Naive thymus-derived CD4-positive, alpha-beta T cell (primary cell): ENCODE measurements at regions of chr19 and their contacts with region 1.

Region 1: GRCh38 chr19:57279418-57280066 is 743 bp upstream of the ZNF460 start:
- DNase-seq: peak in 6 of 9 donors; percentile 60 to 81 (median 78)
- ATAC-seq: peak; percentile 85
- H3K4me3 ChIP-seq: peak overlapping the region; percentile 80
- H3K4me3 Mint-ChIP-seq: no peak overlapping the region
- H3K27ac ChIP-seq: peak overlapping the region; percentile 98
- H3K27ac Mint-ChIP-seq: peak overlapping the region in 2 of 9 donors; percentile 6 to 51
- H3K4me1 ChIP-seq: peaks cover 18 to 23% of the 10 kb centered on the region in 2 donors
- H3K4me1 Mint-ChIP-seq: peaks cover 7 to 33% (median 25%) of the 10 kb centered on the region in 7 donors
- H3K27me3 ChIP-seq: no peaks in the 10 kb centered on the region
- H3K27me3 Mint-ChIP-seq: no peaks in the 10 kb centered on the region

Region 2: DNA sequence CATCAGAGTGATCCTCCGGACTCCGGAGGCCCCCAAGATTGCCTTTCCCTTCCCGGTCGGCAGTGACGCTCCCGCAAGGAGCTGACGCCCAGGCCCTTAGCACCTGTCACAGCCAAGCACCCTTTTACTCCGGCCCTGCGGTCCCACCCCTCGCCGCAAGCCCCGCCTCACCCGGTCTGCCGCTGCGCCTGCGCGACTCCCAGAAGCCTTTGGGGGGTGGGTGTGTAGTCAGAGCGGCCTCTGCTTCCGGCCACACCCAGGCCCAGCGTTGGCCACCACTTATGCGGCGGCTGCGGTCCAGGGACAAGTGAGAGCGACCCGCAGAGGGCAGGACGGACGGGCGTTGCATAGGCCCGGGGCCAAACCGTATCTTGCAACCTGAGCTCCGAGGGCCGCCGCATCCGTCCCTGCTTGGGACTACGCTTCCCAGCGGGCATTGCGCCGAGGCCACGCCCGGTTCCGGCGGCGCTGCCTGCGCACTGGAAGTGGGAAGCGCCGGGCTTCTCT is 741.2 kb before region 1 on chr19:
- CTCF ChIA-PET with region 1: no interaction called
- POLR2A ChIA-PET with region 1: no interaction called
- intact Hi-C with region 1: loop called in 1 of 2 experiments (anchors 1 kb)
- DNase-seq: peak; percentile 84 to 94 (median 89)
- ATAC-seq: peak; percentile 94
- H3K4me3 ChIP-seq: peak overlapping the region; percentile 87
- H3K4me3 Mint-ChIP-seq: peak overlapping the region; percentile 88 to 95 (median 93)
- H3K27ac ChIP-seq: peak overlapping the region; percentile 83
- H3K27ac Mint-ChIP-seq: peak overlapping the region; percentile 90 to 97 (median 94)
- H3K4me1 ChIP-seq: peaks cover 5% of the 10 kb centered on the region in 2 donors
- H3K4me1 Mint-ChIP-seq: peaks cover 13 to 27% (median 21%) of the 10 kb centered on the region in 7 donors
- H3K27me3 ChIP-seq: no peaks in the 10 kb centered on the region
- H3K27me3 Mint-ChIP-seq: peaks cover 0 to 4% (median 0%) of the 10 kb centered on the region in 5 donors

Region 3: GRCh38 chr19:57320180-57321084 is 40.9 kb after region 1 on chr19 and contains the start of gene ZNF543:
- CTCF ChIA-PET with region 1: no interaction called
- POLR2A ChIA-PET with region 1: no interaction called
- intact Hi-C with region 1: loop called (anchors 1 kb)
- DNase-seq: peak; percentile 78 to 90 (median 84)
- ATAC-seq: peak; percentile 98
- H3K4me3 ChIP-seq: peak within 1 kb of the TSS; percentile 76
- H3K4me3 Mint-ChIP-seq: peak within 1 kb of the TSS; percentile 87 to 98 (median 94)
- H3K27ac ChIP-seq: peak within 1 kb of the TSS; percentile 83
- H3K27ac Mint-ChIP-seq: peak within 1 kb of the TSS; percentile 82 to 98 (median 96)
- H3K4me1 ChIP-seq: peaks cover 0 to 18% of the 10 kb centered on the region in 2 donors
- H3K4me1 Mint-ChIP-seq: peaks cover 14 to 30% (median 25%) of the 10 kb centered on the region in 7 donors
- H3K27me3 ChIP-seq: peaks cover 0 to 6% of the 10 kb centered on the region in 2 donors
- H3K27me3 Mint-ChIP-seq: peaks cover 20 to 31% (median 24%) of the 10 kb centered on the region in 5 donors
- total RNA-seq, gene ZNF543: 3.6 to 9.0 (median 8.0) TPM

Region 4: GRCh38 chr19:57477191-57478008 is 197.9 kb after region 1 on chr19 and contains the start of gene ZNF772:
- CTCF ChIA-PET with region 1: no interaction called
- POLR2A ChIA-PET with region 1: no interaction called
- intact Hi-C with region 1: loop called in 1 of 2 experiments (anchors 1 kb)
- DNase-seq: peak; percentile 55 to 96 (median 88)
- ATAC-seq: peak; percentile 99
- H3K4me3 ChIP-seq: peak within 1 kb of the TSS; percentile 80
- H3K4me3 Mint-ChIP-seq: peak within 1 kb of the TSS; percentile 87 to 95 (median 92)
- H3K27ac ChIP-seq: peak within 1 kb of the TSS; percentile 77
- H3K27ac Mint-ChIP-seq: peak within 1 kb of the TSS; percentile 84 to 96 (median 89)
- H3K4me1 ChIP-seq: peaks cover 5 to 12% of the 10 kb centered on the region in 2 donors
- H3K4me1 Mint-ChIP-seq: peaks cover 10 to 26% (median 19%) of the 10 kb centered on the region in 7 donors
- H3K27me3 ChIP-seq: no peaks in the 10 kb centered on the region
- H3K27me3 Mint-ChIP-seq: peaks cover 0 to 7% (median 0%) of the 10 kb centered on the region in 5 donors
- total RNA-seq, gene ZNF772: 1.5 to 20.5 (median 4.3) TPM

Region 5: DNA sequence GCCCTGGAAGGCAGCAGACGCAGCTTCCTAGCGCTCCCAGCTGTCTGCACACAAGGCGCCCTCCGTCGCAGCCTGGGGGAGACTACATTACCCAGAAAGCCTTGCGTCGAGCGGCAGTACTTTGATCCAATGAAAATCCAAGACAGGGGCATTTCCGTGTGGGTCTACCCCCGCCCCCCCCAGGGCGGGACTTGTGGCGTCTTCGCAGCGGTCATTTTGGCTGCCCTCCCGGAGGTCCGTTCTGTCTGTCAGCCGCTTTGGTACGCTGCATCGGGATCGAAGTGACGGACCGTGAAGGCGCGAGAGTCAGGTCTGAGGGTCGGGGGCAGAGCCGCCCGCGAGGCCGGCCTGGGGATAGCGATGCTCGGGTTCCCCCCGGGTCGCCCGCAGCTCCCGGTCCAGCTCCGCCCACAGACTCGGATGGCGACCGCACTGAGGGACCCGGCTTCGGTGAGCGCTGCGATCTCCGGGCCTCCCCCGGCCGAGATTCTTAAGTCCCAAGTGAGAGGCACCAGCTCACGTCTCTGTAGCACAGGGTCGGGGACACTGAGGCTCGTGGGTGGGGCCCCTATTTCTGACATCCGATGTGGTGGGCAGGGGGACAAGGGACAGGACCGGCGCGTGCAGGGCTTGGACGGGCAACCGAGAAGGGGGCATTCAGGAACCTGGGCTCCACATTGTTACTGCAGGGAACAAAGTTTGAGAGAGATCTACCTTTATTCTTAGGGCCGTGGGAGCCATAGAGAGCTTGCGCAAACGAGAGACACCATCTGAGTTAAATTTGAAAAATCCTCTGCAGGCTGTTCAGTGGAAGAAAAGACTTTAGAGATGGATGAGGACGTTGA is 353.7 kb after region 1 on chr19 and contains the start of gene ZNF211:
- CTCF ChIA-PET with region 1: no interaction called
- POLR2A ChIA-PET with region 1: no interaction called
- intact Hi-C with region 1: loop called in 1 of 2 experiments (anchors 1 kb)
- DNase-seq: peak; percentile 74 to 89 (median 86)
- ATAC-seq: peak; percentile 100
- H3K4me3 ChIP-seq: peak within 1 kb of the TSS; percentile 87
- H3K4me3 Mint-ChIP-seq: peak within 1 kb of the TSS; percentile 87 to 97 (median 94)
- H3K27ac ChIP-seq: peak within 1 kb of the TSS; percentile 90
- H3K27ac Mint-ChIP-seq: peak within 1 kb of the TSS; percentile 81 to 97 (median 89)
- H3K4me1 ChIP-seq: peaks cover 3 to 13% of the 10 kb centered on the region in 2 donors
- H3K4me1 Mint-ChIP-seq: peaks cover 21 to 36% (median 28%) of the 10 kb centered on the region in 7 donors
- H3K27me3 ChIP-seq: no peaks in the 10 kb centered on the region
- H3K27me3 Mint-ChIP-seq: no peaks in the 10 kb centered on the region
- total RNA-seq, gene ZNF211: 18.0 to 56.7 (median 33.7) TPM

Region 6: DNA sequence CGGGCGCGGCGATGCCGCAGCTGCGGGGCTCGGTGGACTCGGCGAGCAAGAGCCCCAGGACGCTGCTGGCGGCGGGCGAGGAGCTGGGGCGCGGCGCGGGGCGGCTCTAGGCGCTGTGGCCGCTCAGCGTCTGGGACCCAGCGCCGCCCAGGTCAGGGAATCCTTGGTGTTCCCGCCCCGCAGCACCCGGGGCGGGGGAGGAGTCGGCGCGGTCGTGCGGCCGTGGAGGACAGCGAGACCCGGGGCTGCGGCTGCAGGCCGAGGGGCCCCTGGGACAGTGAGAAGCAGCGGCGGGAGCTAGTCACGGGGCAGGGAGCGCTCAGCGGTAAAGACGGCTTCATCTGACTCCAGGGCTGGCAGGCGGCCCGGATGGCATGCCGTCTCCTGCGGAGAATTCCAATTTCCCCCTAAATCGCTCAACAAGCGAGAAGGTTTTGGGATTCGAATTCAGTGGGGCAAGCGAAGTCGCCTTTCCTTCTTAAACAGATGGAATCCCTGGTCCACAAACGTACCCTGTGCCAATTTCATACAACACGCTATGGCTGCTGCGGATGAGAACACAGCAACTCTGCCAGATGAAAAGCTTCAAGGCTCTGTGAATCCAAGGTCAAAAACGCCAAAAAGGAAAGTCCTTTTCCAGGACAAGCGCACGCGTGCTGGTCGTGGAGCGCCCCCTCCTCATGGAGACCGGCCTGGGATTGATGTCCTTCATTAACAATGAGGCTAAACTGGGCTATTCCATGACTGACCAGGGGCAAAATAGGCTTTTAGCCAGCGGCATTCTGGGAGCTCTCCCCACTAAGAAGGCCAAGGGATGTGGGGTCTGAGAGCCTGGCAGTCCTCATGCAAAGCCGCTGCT is 385.0 kb after region 1 on chr19:
- CTCF ChIA-PET with region 1: no interaction called
- POLR2A ChIA-PET with region 1: no interaction called
- intact Hi-C with region 1: no loop called
- DNase-seq: peak in 5 of 9 donors; percentile 2 to 28 (median 11)
- ATAC-seq: peak; percentile 38
- H3K4me3 ChIP-seq: no peak overlapping the region
- H3K4me3 Mint-ChIP-seq: peak overlapping the region; percentile 63 to 91 (median 73)
- H3K27ac ChIP-seq: no peak overlapping the region
- H3K27ac Mint-ChIP-seq: no peak overlapping the region
- H3K4me1 ChIP-seq: peaks cover 0 to 3% of the 10 kb centered on the region in 2 donors
- H3K4me1 Mint-ChIP-seq: peaks cover 0 to 7% (median 4%) of the 10 kb centered on the region in 7 donors
- H3K27me3 ChIP-seq: peaks cover 0 to 13% of the 10 kb centered on the region in 2 donors
- H3K27me3 Mint-ChIP-seq: peaks cover 12 to 73% (median 52%) of the 10 kb centered on the region in 5 donors